ENCODE measurements at regions of chr4 and their contacts with region 1.

Region 1: DNA sequence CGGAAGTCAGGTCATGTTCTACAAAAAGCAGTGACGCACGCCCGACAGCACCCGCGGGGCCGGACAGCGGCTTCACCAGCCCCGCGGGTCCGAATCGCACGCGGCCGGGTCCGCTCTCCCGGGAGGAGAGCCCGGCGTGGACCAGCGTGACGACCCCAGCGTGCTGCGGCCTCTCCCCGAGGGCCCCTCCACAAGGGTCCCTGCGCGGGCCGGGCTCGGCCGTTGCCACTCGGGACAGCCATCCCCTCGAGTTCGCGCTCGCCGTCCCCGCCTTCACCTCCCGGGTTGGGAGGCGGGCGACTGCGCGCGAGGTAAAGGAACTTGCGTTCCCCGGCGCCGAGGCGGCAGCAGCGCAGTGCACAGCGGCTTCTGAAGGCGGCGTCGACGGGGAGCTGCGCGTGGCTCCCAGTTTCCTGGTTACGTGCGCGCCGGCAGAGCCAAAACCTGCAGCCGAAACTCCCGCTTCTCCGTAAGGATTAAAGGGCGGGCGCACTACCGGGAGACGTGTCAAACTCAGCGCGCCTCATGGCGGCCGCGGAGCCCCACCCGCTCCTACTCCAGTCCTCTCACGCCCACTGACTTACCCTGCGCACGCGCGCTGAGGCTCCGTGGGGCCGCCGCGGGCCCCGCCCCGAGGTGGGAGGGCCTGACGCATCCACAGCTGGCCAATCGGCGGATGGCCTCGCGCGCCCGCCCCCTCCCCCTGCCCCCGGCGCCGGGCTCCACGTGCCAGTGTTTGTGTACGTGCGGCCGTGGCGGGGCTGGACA is 416 bp upstream of the LRP2BP start:
- DNase-seq: peak; percentile 99
- H3K4me3 ChIP-seq: peak overlapping the region; percentile 55 to 80 (median 72)
- H3K27ac ChIP-seq: peak overlapping the region; percentile 94 to 100 (median 98)
- H3K4me1 ChIP-seq: peaks cover 0 to 38% (median 11%) of the 10 kb centered on the region in 4 donors
- H3K27me3 ChIP-seq: no peaks in the 10 kb centered on the region
- CTCF ChIP-seq: no peak
- EP300 ChIP-seq: peak in 3 of 4 donors; percentile 70 to 94 (median 85)
- POLR2A ChIP-seq: peak; percentile 59 to 65

Region 2: DNA sequence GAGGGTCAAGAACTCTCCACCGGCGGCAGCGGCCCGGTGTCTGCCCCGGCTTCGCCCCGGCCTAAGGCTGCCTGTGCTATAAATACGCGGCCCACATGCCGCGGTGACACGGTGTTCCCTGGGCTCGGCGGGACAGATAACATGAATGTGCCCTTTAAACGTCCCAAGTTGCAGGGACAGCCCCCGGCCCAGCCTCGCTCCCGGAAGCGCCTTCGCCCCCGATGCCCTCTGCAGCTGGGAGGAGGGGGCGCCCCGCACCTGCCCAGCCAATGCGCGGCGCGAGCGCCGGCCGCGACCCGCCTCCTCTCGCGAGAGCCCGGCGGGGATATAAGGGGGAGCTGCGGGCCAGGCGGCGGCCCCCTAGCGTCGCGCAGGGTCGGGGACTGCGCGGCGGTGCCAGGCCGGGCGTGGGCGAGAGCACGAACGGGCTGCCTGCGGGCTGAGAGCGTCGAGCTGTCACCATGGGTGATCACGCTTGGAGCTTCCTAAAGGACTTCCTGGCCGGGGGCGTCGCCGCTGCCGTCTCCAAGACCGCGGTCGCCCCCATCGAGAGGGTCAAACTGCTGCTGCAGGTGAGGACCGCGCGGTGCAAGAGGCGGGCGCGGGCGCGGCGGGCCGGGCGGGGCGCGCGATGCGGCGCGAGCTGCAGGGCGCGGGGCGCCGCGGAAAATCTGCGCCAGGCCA is 253.1 kb before region 1 on chr4 and contains the start of gene SLC25A4:
- intact Hi-C with region 1: loop called (anchors 10 kb)
- DNase-seq: peak; percentile 94
- H3K4me3 ChIP-seq: peak within 1 kb of the TSS; percentile 60 to 81 (median 78)
- H3K27ac ChIP-seq: peak within 1 kb of the TSS; percentile 88 to 98 (median 94)
- H3K4me1 ChIP-seq: peaks cover 0 to 41% (median 34%) of the 10 kb centered on the region in 4 donors
- H3K27me3 ChIP-seq: no peaks in the 10 kb centered on the region
- CTCF ChIP-seq: peak in 3 of 4 experiments; percentile 15 to 57 (median 50)
- EP300 ChIP-seq: peak in 1 of 4 donors; percentile 7
- POLR2A ChIP-seq: peak; percentile 62
- total RNA-seq, gene SLC25A4: 89.1 to 127 (median 112) TPM

Region 3: DNA sequence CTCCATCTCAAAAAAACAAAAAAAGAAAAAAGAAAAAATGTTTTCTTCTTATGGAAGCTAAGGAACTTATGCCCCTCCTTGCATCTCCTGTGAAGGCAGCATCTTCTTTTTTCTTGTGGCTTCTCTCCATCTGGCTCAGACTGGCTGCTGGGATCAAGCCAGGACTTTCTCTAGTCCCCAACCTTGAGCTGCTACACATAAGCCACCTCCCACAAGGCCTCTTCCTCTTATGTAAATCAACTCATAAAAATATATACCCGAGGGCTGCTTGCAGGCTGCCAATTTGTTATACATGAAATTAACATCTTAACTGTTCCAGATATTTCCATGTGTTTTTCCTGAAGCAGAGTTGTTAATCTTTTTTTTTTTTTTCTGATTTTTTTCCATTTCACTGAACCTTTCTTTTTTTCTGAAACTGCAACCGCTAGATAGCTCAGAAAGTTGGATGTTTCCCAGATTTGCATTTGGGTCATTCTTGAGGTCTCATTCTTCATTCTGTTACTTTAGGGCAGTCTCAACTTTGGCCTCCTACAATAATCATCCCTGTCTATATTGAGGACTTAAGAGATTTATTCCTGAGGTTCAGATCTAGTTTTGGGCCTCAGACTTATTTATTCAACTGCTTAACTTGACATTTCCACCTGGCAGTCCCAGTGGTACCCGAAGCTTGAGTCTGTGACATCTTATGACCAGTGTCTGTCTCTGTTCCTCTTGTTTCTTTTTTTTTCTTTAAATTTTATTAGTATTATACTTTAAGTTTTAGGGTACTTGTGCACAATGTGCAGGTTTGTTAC is 176.4 kb before region 1 on chr4:
- intact Hi-C with region 1: no loop called
- DNase-seq: peak; percentile 93
- H3K4me3 ChIP-seq: no peak overlapping the region
- H3K27ac ChIP-seq: peak overlapping the region; percentile 43 to 73 (median 56)
- H3K4me1 ChIP-seq: peaks cover 0 to 58% (median 29%) of the 10 kb centered on the region in 4 donors
- H3K27me3 ChIP-seq: no peaks in the 10 kb centered on the region
- CTCF ChIP-seq: no peak
- EP300 ChIP-seq: no peak
- POLR2A ChIP-seq: no peak

Region 4: DNA sequence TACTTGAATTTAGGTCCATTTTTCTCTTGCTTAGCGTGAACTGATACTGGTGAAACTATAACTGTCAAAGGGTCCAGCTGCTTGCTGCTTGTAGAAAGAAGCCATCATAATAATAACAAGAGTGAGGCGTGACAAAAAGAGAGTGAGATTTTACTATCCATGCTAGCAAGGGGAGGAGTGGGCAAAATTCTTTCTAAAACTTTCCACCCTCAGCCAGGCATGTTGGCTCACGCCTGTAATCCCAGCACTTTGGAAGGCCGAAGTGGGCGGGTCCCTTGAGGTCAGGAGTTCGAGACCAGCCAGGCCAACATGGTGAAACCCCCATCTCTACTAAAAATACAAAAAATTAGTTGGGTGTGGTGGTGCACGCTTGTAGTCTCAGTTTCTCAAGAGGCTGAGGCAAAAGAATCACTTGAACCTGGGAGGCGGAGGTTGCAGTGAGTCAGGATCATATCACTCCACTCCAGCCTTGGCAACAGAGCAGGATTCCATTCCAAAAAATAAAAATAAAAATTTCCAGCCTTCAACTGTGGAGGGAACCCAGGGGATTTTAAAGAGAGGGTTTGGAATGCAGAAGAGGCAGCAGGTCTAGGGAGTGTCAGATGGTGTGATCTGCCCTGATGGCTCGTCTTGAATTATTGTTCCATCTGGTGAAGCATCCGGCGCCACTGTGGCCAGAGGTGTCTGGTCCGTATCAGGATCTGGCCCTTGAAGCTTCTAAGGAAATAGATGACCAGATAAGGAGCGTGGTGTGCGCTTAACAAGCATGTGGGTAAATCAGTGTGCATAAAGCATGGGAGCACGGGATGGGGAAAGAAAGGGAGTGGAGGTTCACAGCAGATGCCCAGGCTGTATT is 52.2 kb before region 1 on chr4:
- intact Hi-C with region 1: loop called (anchors 2 kb)
- DNase-seq: peak; percentile 93
- H3K4me3 ChIP-seq: no peak overlapping the region
- H3K27ac ChIP-seq: peak overlapping the region; percentile 61 to 88 (median 80)
- H3K4me1 ChIP-seq: peaks cover 0 to 37% (median 23%) of the 10 kb centered on the region in 4 donors
- H3K27me3 ChIP-seq: no peaks in the 10 kb centered on the region
- CTCF ChIP-seq: no peak
- EP300 ChIP-seq: peak; percentile 48 to 93 (median 85)
- POLR2A ChIP-seq: no peak

Region 5: GRCh38 chr4:185425647-185426352 is 29.7 kb after region 1 on chr4 and contains the start of gene UFSP2:
- intact Hi-C with region 1: loop called (anchors 1 kb)
- DNase-seq: peak; percentile 95
- H3K4me3 ChIP-seq: peak within 1 kb of the TSS; percentile 57 to 84 (median 73)
- H3K27ac ChIP-seq: peak within 1 kb of the TSS; percentile 91 to 95 (median 92)
- H3K4me1 ChIP-seq: peaks cover 0 to 41% (median 19%) of the 10 kb centered on the region in 4 donors
- H3K27me3 ChIP-seq: no peaks in the 10 kb centered on the region
- CTCF ChIP-seq: no peak
- EP300 ChIP-seq: peak in 2 of 4 donors; percentile 43 to 56
- POLR2A ChIP-seq: peak; percentile 64 to 70
- total RNA-seq, gene UFSP2: 31.3 to 56.0 (median 48.6) TPM

Region 6: DNA sequence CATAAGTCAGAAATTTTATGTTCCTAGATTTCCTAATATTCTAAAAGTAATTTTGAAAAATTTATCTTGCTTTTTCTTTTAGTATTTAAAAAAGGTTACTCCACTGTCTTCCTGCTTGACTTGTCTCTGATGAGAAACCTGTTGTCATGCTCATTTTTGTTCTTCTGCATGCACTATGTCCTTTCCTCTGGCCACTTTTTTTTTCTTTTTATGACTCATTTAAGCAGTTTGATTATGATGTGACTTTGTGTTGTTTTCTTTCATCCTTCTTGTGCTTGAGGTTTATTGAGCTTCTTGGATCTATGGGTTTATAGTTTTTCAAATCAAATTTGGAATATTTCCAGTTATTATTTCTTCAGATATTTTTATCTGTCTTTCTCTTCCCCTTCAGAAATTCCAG is 41.7 kb after region 1 on chr4:
- intact Hi-C with region 1: no loop called
- DNase-seq: no peak
- H3K4me3 ChIP-seq: no peak overlapping the region
- H3K27ac ChIP-seq: no peak overlapping the region
- H3K4me1 ChIP-seq: no peaks in the 10 kb centered on the region
- H3K27me3 ChIP-seq: no peaks in the 10 kb centered on the region
- CTCF ChIP-seq: no peak
- EP300 ChIP-seq: no peak
- POLR2A ChIP-seq: no peak

Region 7: DNA sequence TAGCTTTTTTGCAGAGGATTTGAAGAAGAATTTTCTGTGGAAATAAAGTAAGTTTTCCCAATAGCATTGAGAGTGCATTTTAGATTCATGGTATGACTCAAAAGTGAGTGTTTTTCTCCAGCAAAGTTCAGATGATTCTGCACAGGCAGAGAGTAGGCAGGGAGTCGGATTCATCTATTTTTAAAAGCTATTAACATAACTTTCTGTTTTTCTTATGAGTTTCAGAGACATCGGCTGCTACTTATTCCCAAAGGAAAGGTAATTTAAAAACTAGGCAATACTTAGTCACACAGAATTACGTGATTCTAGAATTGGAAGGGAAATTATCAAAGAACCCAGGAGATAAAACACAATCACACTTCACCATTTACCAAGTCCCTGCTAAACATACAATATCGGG is 71.0 kb after region 1 on chr4:
- intact Hi-C with region 1: no loop called
- DNase-seq: no peak
- H3K4me3 ChIP-seq: no peak overlapping the region
- H3K27ac ChIP-seq: no peak overlapping the region
- H3K4me1 ChIP-seq: peaks cover 0 to 11% (median 5%) of the 10 kb centered on the region in 4 donors
- H3K27me3 ChIP-seq: no peaks in the 10 kb centered on the region
- CTCF ChIP-seq: no peak
- EP300 ChIP-seq: no peak
- POLR2A ChIP-seq: no peak

Region 8: GRCh38 chr4:185591679-185592141 is 195.6 kb after region 1 on chr4:
- intact Hi-C with region 1: loop called (anchors 5 kb)
- DNase-seq: no peak
- H3K4me3 ChIP-seq: no peak overlapping the region
- H3K27ac ChIP-seq: peak overlapping the region; percentile 60 to 72 (median 68)
- H3K4me1 ChIP-seq: peaks cover 0 to 20% (median 17%) of the 10 kb centered on the region in 4 donors
- H3K27me3 ChIP-seq: no peaks in the 10 kb centered on the region
- CTCF ChIP-seq: no peak
- EP300 ChIP-seq: no peak
- POLR2A ChIP-seq: no peak

Measured in sigmoid colon (tissue), 7 donors.